ENCODE measurements at regions of chr7 and their contacts with region 1.

Region 1: DNA sequence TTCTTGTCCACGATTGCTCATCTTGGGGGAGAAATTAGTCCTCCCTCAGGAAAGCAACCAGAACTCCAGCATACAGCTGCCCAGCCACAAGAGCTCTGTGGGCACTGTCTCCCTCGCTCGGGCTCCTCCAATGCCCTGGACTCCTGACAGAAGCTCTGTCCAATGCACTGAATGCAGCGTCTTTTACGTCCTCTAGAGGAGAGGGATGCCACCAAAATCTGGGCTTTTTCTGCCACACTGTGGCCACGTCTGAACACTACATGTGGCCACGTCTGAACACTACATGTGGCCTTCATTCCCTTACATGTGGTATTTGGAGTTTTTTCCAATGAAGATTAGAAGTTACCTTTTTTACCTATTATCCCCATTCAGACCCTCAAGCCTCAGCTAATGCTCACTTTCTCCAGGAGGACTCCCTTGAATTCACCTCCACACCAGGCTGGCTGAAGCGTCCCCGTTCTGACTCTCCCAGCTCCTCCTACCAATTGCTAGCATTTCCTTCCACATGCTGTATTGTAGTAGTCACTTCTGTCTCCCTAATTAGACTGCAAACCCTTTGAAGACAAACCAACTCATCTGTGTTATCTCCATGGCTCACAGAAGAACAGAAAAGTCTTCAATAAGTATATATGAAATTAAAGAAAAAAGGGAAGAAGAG is 134.3 kb upstream of the PDE1C start:
- DNase-seq: peak; percentile 96
- ATAC-seq: peak; percentile 98
- H3K4me3 ChIP-seq: peak overlapping the region; percentile 64
- H3K27ac ChIP-seq: no peak overlapping the region
- H3K4me1 ChIP-seq: peaks cover 8% of the 10 kb centered on the region; the same call in 1 of the 2 replicates
- H3K27me3 ChIP-seq: 0 out of 2 replicates have a peak, but pooled peaks cover 7% of the 10 kb centered on the region
- CTCF ChIP-seq: peak; percentile 93

Region 2: GRCh38 chr7:31648288-31648687 is 556.2 kb before region 1 on chr7:
- CTCF ChIA-PET with region 1: no interaction called
- POLR2A ChIA-PET with region 1: no interaction called
- intact Hi-C with region 1: loop called (anchors 10 kb)
- DNase-seq: peak; percentile 15
- ATAC-seq: 0 out of 2 replicates have a peak, but pooled peaks have one; percentile 24
- H3K4me3 ChIP-seq: no peak overlapping the region
- H3K27ac ChIP-seq: no peak overlapping the region
- H3K4me1 ChIP-seq: no peaks in the 10 kb centered on the region
- H3K27me3 ChIP-seq: peaks cover 76% of the 10 kb centered on the region
- CTCF ChIP-seq: peak; percentile 43; the same call in 1 of the 2 replicates

Region 3: GRCh38 chr7:31782411-31782991 is 422.0 kb before region 1 on chr7:
- CTCF ChIA-PET with region 1: interaction called, 3 read pairs
- POLR2A ChIA-PET with region 1: no interaction called
- intact Hi-C with region 1: loop called (anchors 1 kb)
- DNase-seq: peak; percentile 92
- ATAC-seq: peak; percentile 80
- H3K4me3 ChIP-seq: no peak overlapping the region
- H3K27ac ChIP-seq: no peak overlapping the region; the same call in 1 of the 2 replicates
- H3K4me1 ChIP-seq: peaks cover 5% of the 10 kb centered on the region; the same call in 1 of the 2 replicates
- H3K27me3 ChIP-seq: no peaks in the 10 kb centered on the region
- CTCF ChIP-seq: peak; percentile 79

Region 4: DNA sequence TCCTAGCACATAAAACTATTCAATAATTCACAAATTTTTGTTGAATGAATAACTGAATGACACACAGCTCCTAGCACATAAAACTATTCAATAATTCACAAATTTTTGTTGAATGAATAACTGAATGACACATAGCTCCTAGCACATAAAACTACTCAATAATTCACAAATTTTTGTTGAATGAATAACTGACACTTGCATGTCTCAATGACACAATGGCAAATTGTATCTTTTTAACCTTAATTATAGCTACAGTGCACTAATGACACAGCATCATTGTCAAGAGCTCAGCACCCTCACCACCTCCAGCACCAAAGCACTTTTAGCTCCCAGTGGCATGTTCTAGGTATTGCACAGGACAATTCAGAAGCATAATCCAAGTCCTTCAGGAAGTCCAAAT is 265.8 kb before region 1 on chr7:
- CTCF ChIA-PET with region 1: no interaction called
- POLR2A ChIA-PET with region 1: interaction called, 6 read pairs
- intact Hi-C with region 1: loop called (anchors 1 kb)
- DNase-seq: peak; percentile 85
- ATAC-seq: peak; percentile 71
- H3K4me3 ChIP-seq: no peak overlapping the region
- H3K27ac ChIP-seq: peak overlapping the region; percentile 63
- H3K4me1 ChIP-seq: peaks cover 63% of the 10 kb centered on the region
- H3K27me3 ChIP-seq: no peaks in the 10 kb centered on the region
- CTCF ChIP-seq: peak; percentile 49

Region 5: GRCh38 chr7:32093415-32094408 is 110.8 kb before region 1 on chr7:
- CTCF ChIA-PET with region 1: interaction called, 3 read pairs
- POLR2A ChIA-PET with region 1: no interaction called
- intact Hi-C with region 1: loop called (anchors 1 kb)
- DNase-seq: peak; percentile 96
- ATAC-seq: peak; percentile 81
- H3K4me3 ChIP-seq: no peak overlapping the region
- H3K27ac ChIP-seq: peak overlapping the region; percentile 84
- H3K4me1 ChIP-seq: peaks cover 40% of the 10 kb centered on the region
- H3K27me3 ChIP-seq: no peaks in the 10 kb centered on the region
- CTCF ChIP-seq: no peak

Region 6: GRCh38 chr7:32164346-32164957 is 40.0 kb before region 1 on chr7:
- CTCF ChIA-PET with region 1: interaction called, 7 read pairs
- POLR2A ChIA-PET with region 1: no interaction called
- intact Hi-C with region 1: loop called (anchors 1 kb)
- DNase-seq: peak; percentile 85
- ATAC-seq: peak; percentile 53
- H3K4me3 ChIP-seq: no peak overlapping the region
- H3K27ac ChIP-seq: peak overlapping the region; percentile 87; the same call in 1 of the 2 replicates
- H3K4me1 ChIP-seq: peaks cover 39% of the 10 kb centered on the region
- H3K27me3 ChIP-seq: no peaks in the 10 kb centered on the region
- CTCF ChIP-seq: peak; percentile 84

Region 7: GRCh38 chr7:32427769-32428291 is 223.3 kb after region 1 on chr7:
- CTCF ChIA-PET with region 1: no interaction called
- POLR2A ChIA-PET with region 1: no interaction called
- intact Hi-C with region 1: no loop called
- DNase-seq: peak; percentile 58
- ATAC-seq: peak; percentile 89
- H3K4me3 ChIP-seq: no peak overlapping the region
- H3K27ac ChIP-seq: no peak overlapping the region
- H3K4me1 ChIP-seq: no peaks in the 10 kb centered on the region
- H3K27me3 ChIP-seq: peaks cover 72% of the 10 kb centered on the region
- CTCF ChIP-seq: no peak

Measured in PC-3 (cell line).